Ascending aorta (tissue), 2 donors: ENCODE measurements at regions of chr1 and their contacts with region 1.

Region 1: GRCh38 chr1:9376886-9377333 is 84.2 kb downstream of the SPSB1 start:
- DNase-seq: peak; percentile 66 to 95
- H3K4me3 ChIP-seq: peak overlapping the region in 1 of 2 donors; percentile 41
- H3K27ac ChIP-seq: peak overlapping the region; percentile 89 to 96
- H3K4me1 ChIP-seq: peaks cover 51 to 68% of the 10 kb centered on the region in 2 donors
- H3K27me3 ChIP-seq: no peaks in the 10 kb centered on the region
- CTCF ChIP-seq: peak in 1 of 3 experiments; percentile 12

Region 2: DNA sequence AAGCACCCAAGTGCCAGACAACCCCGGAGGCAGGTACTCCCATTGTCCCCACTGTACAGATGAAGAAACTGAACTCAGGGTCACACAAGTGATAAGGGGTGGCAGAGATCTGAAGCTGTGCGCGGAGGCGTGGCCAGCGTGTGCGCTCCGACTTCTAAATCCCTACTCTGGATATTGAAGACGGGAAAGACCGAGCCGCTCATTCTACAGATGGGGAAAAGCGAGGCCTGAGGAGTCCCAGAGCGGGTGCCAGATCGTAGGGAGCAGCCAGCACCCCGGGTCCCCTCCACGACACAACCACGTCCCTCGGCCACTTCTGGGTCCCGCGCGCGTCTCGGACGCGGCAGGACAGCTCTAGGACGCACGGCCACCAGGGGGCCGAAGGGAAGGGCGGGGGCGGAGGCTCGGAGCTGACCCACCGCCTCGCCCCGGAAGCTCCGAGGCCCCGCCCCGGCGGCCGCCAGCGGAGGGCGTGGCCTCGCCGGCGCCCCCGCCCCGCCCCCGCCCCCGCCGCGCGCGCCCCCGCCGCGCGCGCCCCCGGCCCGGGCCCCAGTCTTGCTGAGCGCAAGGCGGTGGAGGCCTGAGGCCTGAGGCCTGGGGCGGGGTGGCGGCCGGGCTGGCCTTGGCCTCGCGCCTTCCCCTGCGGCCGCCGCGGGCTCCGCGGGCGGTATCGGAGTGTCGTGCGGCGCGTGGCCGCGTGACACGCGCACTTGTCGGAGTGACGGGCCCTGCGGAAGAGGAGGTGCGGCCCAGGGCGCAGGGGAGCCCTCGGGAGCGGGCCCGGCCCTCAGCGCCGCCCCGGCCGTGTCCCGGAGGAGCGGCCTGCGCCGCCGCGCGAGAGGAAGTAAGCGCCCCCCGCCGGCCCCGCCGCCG is 142.5 kb before region 1 on chr1 and contains the start of gene H6PD:
- intact Hi-C with region 1: loop called (anchors 2 kb)
- DNase-seq: peak; percentile 45 to 91
- H3K4me3 ChIP-seq: peak within 1 kb of the TSS; percentile 68 to 73
- H3K27ac ChIP-seq: peak within 1 kb of the TSS; percentile 93 to 97
- H3K4me1 ChIP-seq: peaks cover 8 to 46% of the 10 kb centered on the region in 2 donors
- H3K27me3 ChIP-seq: no peaks in the 10 kb centered on the region
- CTCF ChIP-seq: peak; percentile 72 to 96 (median 79)
- total RNA-seq, gene H6PD: 56.8 TPM

Region 3: DNA sequence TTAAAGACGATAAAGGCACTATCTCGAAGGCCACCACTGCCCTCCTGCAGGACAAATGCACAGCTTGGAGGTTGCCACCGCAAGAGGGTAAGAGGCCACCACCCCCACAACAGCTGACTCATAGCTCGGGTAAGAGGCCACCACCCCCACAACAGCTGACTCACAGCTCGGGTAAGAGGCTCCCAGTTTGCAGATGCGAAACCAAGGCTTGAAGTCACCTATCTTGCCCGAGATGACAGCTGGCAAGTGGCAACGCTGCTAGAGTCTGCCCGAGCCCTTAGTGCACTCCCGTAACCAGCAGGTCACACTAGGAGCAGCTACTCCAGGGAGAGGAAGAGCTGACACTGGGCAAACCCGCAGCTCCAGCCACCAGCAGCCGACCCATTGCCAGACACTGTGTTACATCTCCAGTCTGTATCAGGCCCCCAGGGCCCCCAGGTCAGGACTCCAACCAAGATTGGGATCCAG is 101.3 kb before region 1 on chr1:
- intact Hi-C with region 1: no loop called
- DNase-seq: peak in 1 of 2 donors; percentile 75
- H3K4me3 ChIP-seq: no peak overlapping the region
- H3K27ac ChIP-seq: peak overlapping the region in 1 of 2 donors; percentile 18
- H3K4me1 ChIP-seq: peaks cover 10 to 14% of the 10 kb centered on the region in 2 donors
- H3K27me3 ChIP-seq: no peaks in the 10 kb centered on the region
- CTCF ChIP-seq: no peak

Region 4: GRCh38 chr1:9388335-9389180 is 11.6 kb after region 1 on chr1:
- intact Hi-C with region 1: no loop called
- DNase-seq: peak in 1 of 2 donors; percentile 84
- H3K4me3 ChIP-seq: no peak overlapping the region
- H3K27ac ChIP-seq: peak overlapping the region; percentile 13 to 40
- H3K4me1 ChIP-seq: peaks cover 18 to 36% of the 10 kb centered on the region in 2 donors
- H3K27me3 ChIP-seq: no peaks in the 10 kb centered on the region
- CTCF ChIP-seq: no peak

Region 5: GRCh38 chr1:9399510-9400424 is 22.9 kb after region 1 on chr1:
- intact Hi-C with region 1: loop called (anchors 1 kb)
- DNase-seq: peak in 1 of 2 donors; percentile 82
- H3K4me3 ChIP-seq: no peak overlapping the region
- H3K27ac ChIP-seq: peak overlapping the region; percentile 87 to 93
- H3K4me1 ChIP-seq: peaks cover 34 to 55% of the 10 kb centered on the region in 2 donors
- H3K27me3 ChIP-seq: no peaks in the 10 kb centered on the region
- CTCF ChIP-seq: no peak

Region 6: GRCh38 chr1:9413148-9413876 is 36.4 kb after region 1 on chr1:
- intact Hi-C with region 1: loop called (anchors 1 kb)
- DNase-seq: peak; percentile 58 to 92
- H3K4me3 ChIP-seq: peak overlapping the region in 1 of 2 donors; percentile 32
- H3K27ac ChIP-seq: peak overlapping the region; percentile 92 to 94
- H3K4me1 ChIP-seq: peaks cover 24 to 35% of the 10 kb centered on the region in 2 donors
- H3K27me3 ChIP-seq: no peaks in the 10 kb centered on the region
- CTCF ChIP-seq: peak in 1 of 3 experiments; percentile 10

Region 7: GRCh38 chr1:9438431-9439073 is 61.6 kb after region 1 on chr1:
- intact Hi-C with region 1: loop called (anchors 2 kb)
- DNase-seq: peak in 1 of 2 donors; percentile 90
- H3K4me3 ChIP-seq: no peak overlapping the region
- H3K27ac ChIP-seq: peak overlapping the region; percentile 79 to 92
- H3K4me1 ChIP-seq: peaks cover 25 to 57% of the 10 kb centered on the region in 2 donors
- H3K27me3 ChIP-seq: no peaks in the 10 kb centered on the region
- CTCF ChIP-seq: no peak

Region 8: GRCh38 chr1:9449106-9449627 is 72.3 kb after region 1 on chr1:
- intact Hi-C with region 1: loop called (anchors 2 kb)
- DNase-seq: peak in 1 of 2 donors; percentile 92
- H3K4me3 ChIP-seq: peak overlapping the region in 1 of 2 donors; percentile 36
- H3K27ac ChIP-seq: peak overlapping the region; percentile 74 to 81
- H3K4me1 ChIP-seq: peaks cover 12 to 25% of the 10 kb centered on the region in 2 donors
- H3K27me3 ChIP-seq: no peaks in the 10 kb centered on the region
- CTCF ChIP-seq: no peak

Region 9: GRCh38 chr1:9520411-9520810 is 143.5 kb after region 1 on chr1:
- intact Hi-C with region 1: no loop called
- DNase-seq: no peak
- H3K4me3 ChIP-seq: no peak overlapping the region
- H3K27ac ChIP-seq: no peak overlapping the region
- H3K4me1 ChIP-seq: no peaks in the 10 kb centered on the region
- H3K27me3 ChIP-seq: no peaks in the 10 kb centered on the region
- CTCF ChIP-seq: no peak

Region 10: GRCh38 chr1:9573723-9574122 is 196.8 kb after region 1 on chr1:
- intact Hi-C with region 1: no loop called
- DNase-seq: no peak
- H3K4me3 ChIP-seq: no peak overlapping the region
- H3K27ac ChIP-seq: no peak overlapping the region
- H3K4me1 ChIP-seq: no peaks in the 10 kb centered on the region
- H3K27me3 ChIP-seq: no peaks in the 10 kb centered on the region
- CTCF ChIP-seq: peak; percentile 14 to 56 (median 17)